K562 (cell line): ENCODE measurements at regions of chr7 and their contacts with region 1.

Region 1: DNA sequence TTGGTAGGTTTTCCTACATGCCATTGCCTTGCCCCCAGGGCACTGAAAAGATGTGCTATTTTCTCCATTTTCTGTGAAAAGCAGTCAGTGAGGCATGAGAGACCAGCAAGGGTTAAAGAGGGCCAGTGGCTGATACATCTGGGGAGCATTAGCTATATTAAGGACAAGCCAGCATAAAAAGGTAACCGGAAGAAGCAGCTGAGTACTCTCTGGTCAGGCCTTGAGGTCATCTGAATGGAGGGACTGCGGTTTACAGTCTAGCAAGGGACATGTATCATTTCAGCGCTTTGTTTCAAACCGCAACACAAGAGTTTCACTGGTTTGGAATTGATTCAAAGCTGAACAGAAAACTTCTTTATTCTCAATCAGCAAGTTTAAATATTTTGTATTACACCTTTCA is 120.4 kb downstream of the EPDR1 start:
- DNase-seq: peak in 1 of 4 experiments; percentile 10
- ATAC-seq: peak; percentile 53; the same call in 1 of the 3 replicates
- H3K4me3 ChIP-seq: no peak overlapping the region
- H3K27ac ChIP-seq: no peak overlapping the region
- H3K4me1 ChIP-seq: no peaks in the 10 kb centered on the region
- H3K27me3 ChIP-seq: no peaks in the 10 kb centered on the region
- CTCF ChIP-seq: no peak
- EP300 ChIP-seq: no peak
- POLR2A ChIP-seq: no peak
- RAD21 ChIP-seq: no peak

Region 2: DNA sequence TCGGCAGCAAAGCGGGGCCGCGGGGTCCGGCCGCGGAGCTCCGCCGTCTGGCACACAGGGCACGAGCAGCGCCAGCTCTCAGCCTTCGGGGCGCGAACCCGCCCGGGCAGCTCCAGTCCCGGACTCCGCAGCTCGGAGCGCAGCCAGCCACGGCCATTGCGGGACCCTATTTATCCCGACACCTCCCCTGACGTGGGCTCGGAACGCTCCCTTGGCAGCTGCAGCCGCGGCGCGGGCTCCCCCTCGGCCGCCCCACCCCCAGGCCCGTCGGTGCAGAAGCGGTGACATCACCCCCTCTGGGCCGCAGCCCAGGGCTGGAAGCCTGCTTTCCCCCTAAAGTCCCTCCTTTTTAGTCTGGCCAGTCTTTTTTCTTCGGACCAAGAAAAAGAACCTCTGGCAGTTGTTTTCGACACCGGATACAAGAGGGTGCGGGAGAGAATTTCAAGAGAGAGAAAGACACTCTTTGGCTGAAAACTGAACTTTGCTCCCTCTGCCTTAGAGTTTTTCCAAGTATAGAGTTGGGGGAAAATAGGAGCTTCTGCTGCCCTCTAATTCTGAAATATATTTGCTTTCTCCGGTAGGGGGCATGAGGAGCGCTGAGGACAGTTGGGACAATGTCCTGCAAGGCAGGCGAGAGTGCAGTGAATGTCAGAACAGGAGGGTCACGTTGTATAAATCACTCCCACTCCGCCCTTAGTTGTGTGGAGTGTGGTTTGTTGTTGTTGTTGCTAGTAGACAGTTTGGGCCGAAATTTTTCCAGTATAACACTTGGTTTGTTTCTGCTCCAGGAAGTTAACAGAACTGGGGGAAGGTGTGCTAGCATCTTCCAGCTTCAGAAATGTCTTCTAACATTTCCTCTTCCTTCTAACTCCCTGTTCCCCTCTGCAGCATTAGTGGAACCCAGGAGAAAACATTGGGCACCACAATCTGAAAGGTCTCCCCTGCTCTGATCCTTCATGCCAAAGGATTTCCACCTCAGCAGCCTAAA is 123.9 kb before region 1 on chr7 and contains the start of gene SFRP4:
- CTCF ChIA-PET with region 1: no interaction called
- POLR2A ChIA-PET with region 1: no interaction called
- in situ Hi-C with region 1: no loop called
- intact Hi-C with region 1: loop called (anchors 1 kb)
- DNase-seq: peak; percentile 28 to 66 (median 36)
- ATAC-seq: peak; percentile 85
- H3K4me3 ChIP-seq: no peak within 1 kb of the TSS
- H3K27ac ChIP-seq: no peak within 1 kb of the TSS
- H3K4me1 ChIP-seq: peaks cover 9 to 26% of the 10 kb centered on the region in 2 experiments
- H3K27me3 ChIP-seq: peaks cover 0 to 8% of the 10 kb centered on the region in 2 experiments; a peak in 3 of 5 replicates
- CTCF ChIP-seq: peak; percentile 67 to 70 (median 68)
- EP300 ChIP-seq: no peak
- POLR2A ChIP-seq: no peak
- RAD21 ChIP-seq: peak; percentile 30 to 66; a peak in 3 of 4 replicates
- polyA plus RNA-seq, gene SFRP4: not detected